CD4-positive, alpha-beta T cell (primary cell): ENCODE measurements at regions of chrX and their contacts with region 1.

Region 1: DNA sequence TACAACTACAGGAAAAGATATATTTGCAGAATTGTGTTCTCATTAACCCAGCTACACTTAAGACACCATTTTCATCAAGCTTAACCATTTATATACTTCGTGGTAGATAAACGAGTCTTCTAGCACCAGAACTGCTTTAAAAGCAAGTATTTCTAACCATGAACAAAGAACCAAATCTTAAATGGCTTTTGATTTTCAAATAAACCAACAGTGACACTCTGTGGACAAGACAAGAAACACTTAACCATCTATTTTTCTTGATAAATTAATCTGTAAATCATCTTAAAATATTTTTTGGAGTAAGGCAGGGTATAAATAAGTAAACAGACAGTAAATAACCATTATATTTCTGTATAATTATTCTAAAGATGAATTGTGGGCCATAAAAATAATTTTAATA is 10.2 kb downstream of the BEND2 start:
- DNase-seq: peak in 2 of 14 experiments; percentile 1 to 8
- ATAC-seq: no peak
- H3K4me3 ChIP-seq: no peak overlapping the region
- H3K4me3 Mint-ChIP-seq: no peak overlapping the region
- H3K27ac ChIP-seq: no peak overlapping the region
- H3K27ac Mint-ChIP-seq: no peak overlapping the region
- H3K4me1 ChIP-seq: no peaks in the 10 kb centered on the region
- H3K4me1 Mint-ChIP-seq: no peaks in the 10 kb centered on the region
- H3K27me3 ChIP-seq: no peaks in the 10 kb centered on the region
- H3K27me3 Mint-ChIP-seq: no peaks in the 10 kb centered on the region
- CTCF ChIP-seq: no peak

Region 2: GRCh38 chrX:17242470-17242869 is 968.0 kb before region 1 on chrX:
- CTCF ChIA-PET with region 1: no interaction called
- POLR2A ChIA-PET with region 1: no interaction called
- intact Hi-C with region 1: loop called in 1 of 2 experiments (anchors 5 kb)
- DNase-seq: peak in 8 of 14 experiments; percentile 0 to 49 (median 14)
- ATAC-seq: no peak
- H3K4me3 ChIP-seq: no peak overlapping the region
- H3K4me3 Mint-ChIP-seq: no peak overlapping the region
- H3K27ac ChIP-seq: no peak overlapping the region
- H3K27ac Mint-ChIP-seq: no peak overlapping the region
- H3K4me1 ChIP-seq: no peaks in the 10 kb centered on the region
- H3K4me1 Mint-ChIP-seq: no peaks in the 10 kb centered on the region
- H3K27me3 ChIP-seq: no peaks in the 10 kb centered on the region
- H3K27me3 Mint-ChIP-seq: peaks cover 11% of the 10 kb centered on the region
- CTCF ChIP-seq: peak; percentile 66

Region 3: DNA sequence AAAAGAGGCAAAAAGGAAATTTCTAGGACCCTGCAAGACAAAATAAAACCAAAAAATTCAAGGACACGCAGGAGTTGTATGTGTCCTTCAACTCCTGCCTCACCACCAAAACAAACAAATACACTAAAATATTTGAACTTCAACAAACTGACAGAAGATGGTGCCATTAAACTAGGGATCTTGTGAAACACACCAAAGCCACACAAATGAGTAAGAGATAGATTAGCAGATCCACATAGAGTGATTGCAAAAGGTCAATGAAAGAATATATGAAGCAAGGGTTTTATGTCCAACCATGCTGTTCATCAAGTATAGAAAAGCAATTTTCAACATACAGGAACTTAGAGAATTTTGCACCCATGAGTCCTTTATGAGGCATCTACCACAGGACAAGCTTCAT is 513.3 kb before region 1 on chrX:
- CTCF ChIA-PET with region 1: no interaction called
- POLR2A ChIA-PET with region 1: no interaction called
- intact Hi-C with region 1: loop called (anchors 2 to 5 kb)
- DNase-seq: peak in 3 of 14 experiments; percentile 7 to 31 (median 22)
- ATAC-seq: peak; percentile 34
- H3K4me3 ChIP-seq: no peak overlapping the region
- H3K4me3 Mint-ChIP-seq: no peak overlapping the region
- H3K27ac ChIP-seq: no peak overlapping the region
- H3K27ac Mint-ChIP-seq: no peak overlapping the region
- H3K4me1 ChIP-seq: no peaks in the 10 kb centered on the region
- H3K4me1 Mint-ChIP-seq: no peaks in the 10 kb centered on the region
- H3K27me3 ChIP-seq: no peaks in the 10 kb centered on the region
- H3K27me3 Mint-ChIP-seq: no peaks in the 10 kb centered on the region
- CTCF ChIP-seq: no peak

Region 4: DNA sequence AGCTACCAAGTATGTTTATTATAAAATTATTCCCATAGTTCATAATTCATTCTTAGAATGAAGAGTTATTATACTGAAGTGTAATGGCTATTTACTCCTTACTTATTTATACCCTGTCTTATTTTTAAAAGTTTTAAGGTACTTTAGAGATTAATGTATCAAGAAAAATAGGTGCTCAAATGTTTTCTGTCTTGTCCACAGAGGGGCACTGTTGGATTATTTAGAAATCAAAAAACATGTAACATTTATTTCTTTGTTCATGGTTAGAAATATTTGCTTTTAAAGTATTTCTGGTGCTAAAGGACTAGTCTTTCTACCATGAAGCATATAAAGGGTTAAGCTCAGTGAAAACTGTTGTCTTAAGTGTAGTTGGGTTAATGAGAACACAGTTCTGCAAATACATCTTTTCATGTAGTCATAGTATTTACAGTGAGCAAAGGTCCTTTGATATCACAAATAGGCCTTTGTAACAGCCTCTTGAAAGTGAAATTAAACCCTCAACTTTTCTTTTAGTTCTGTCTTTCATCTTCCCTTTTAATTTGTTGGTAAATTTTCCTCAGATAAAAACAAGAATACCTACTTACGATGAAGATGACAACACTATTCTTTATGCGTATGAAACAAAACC is 465.5 kb before region 1 on chrX:
- CTCF ChIA-PET with region 1: no interaction called
- POLR2A ChIA-PET with region 1: no interaction called
- intact Hi-C with region 1: loop called (anchors 2 to 5 kb)
- DNase-seq: peak in 3 of 14 experiments; percentile 11 to 26 (median 25)
- ATAC-seq: no peak
- H3K4me3 ChIP-seq: no peak overlapping the region
- H3K4me3 Mint-ChIP-seq: no peak overlapping the region
- H3K27ac ChIP-seq: no peak overlapping the region
- H3K27ac Mint-ChIP-seq: no peak overlapping the region
- H3K4me1 ChIP-seq: no peaks in the 10 kb centered on the region
- H3K4me1 Mint-ChIP-seq: peaks cover 43% of the 10 kb centered on the region
- H3K27me3 ChIP-seq: peaks cover 0 to 2% of the 10 kb centered on the region in 2 experiments
- H3K27me3 Mint-ChIP-seq: no peaks in the 10 kb centered on the region
- CTCF ChIP-seq: peak; percentile 38

Region 5: GRCh38 chrX:17792826-17793225 is 417.6 kb before region 1 on chrX:
- CTCF ChIA-PET with region 1: no interaction called
- POLR2A ChIA-PET with region 1: no interaction called
- intact Hi-C with region 1: loop called in 1 of 2 experiments (anchors 5 kb)
- DNase-seq: no peak
- ATAC-seq: no peak
- H3K4me3 ChIP-seq: no peak overlapping the region
- H3K4me3 Mint-ChIP-seq: no peak overlapping the region
- H3K27ac ChIP-seq: no peak overlapping the region
- H3K27ac Mint-ChIP-seq: no peak overlapping the region
- H3K4me1 ChIP-seq: peaks cover 5% of the 10 kb centered on the region
- H3K4me1 Mint-ChIP-seq: peaks cover 18% of the 10 kb centered on the region
- H3K27me3 ChIP-seq: no peaks in the 10 kb centered on the region
- H3K27me3 Mint-ChIP-seq: no peaks in the 10 kb centered on the region
- CTCF ChIP-seq: no peak

Region 6: GRCh38 chrX:17812763-17813162 is 397.7 kb before region 1 on chrX:
- CTCF ChIA-PET with region 1: no interaction called
- POLR2A ChIA-PET with region 1: no interaction called
- intact Hi-C with region 1: loop called in 1 of 2 experiments (anchors 5 kb)
- DNase-seq: no peak
- ATAC-seq: no peak
- H3K4me3 ChIP-seq: no peak overlapping the region
- H3K4me3 Mint-ChIP-seq: no peak overlapping the region
- H3K27ac ChIP-seq: no peak overlapping the region
- H3K27ac Mint-ChIP-seq: no peak overlapping the region
- H3K4me1 ChIP-seq: no peaks in the 10 kb centered on the region
- H3K4me1 Mint-ChIP-seq: no peaks in the 10 kb centered on the region
- H3K27me3 ChIP-seq: no peaks in the 10 kb centered on the region
- H3K27me3 Mint-ChIP-seq: no peaks in the 10 kb centered on the region
- CTCF ChIP-seq: no peak

Region 7: GRCh38 chrX:17944833-17945497 is 265.5 kb before region 1 on chrX:
- CTCF ChIA-PET with region 1: no interaction called
- POLR2A ChIA-PET with region 1: no interaction called
- intact Hi-C with region 1: loop called in 1 of 2 experiments (anchors 10 kb)
- DNase-seq: peak in 4 of 14 experiments; percentile 11 to 38 (median 24)
- ATAC-seq: no peak
- H3K4me3 ChIP-seq: no peak overlapping the region
- H3K4me3 Mint-ChIP-seq: no peak overlapping the region
- H3K27ac ChIP-seq: no peak overlapping the region
- H3K27ac Mint-ChIP-seq: no peak overlapping the region
- H3K4me1 ChIP-seq: no peaks in the 10 kb centered on the region
- H3K4me1 Mint-ChIP-seq: no peaks in the 10 kb centered on the region
- H3K27me3 ChIP-seq: no peaks in the 10 kb centered on the region
- H3K27me3 Mint-ChIP-seq: no peaks in the 10 kb centered on the region
- CTCF ChIP-seq: peak; percentile 55